ENCODE measurements at regions of chr22 and their contacts with region 1.

Region 1: DNA sequence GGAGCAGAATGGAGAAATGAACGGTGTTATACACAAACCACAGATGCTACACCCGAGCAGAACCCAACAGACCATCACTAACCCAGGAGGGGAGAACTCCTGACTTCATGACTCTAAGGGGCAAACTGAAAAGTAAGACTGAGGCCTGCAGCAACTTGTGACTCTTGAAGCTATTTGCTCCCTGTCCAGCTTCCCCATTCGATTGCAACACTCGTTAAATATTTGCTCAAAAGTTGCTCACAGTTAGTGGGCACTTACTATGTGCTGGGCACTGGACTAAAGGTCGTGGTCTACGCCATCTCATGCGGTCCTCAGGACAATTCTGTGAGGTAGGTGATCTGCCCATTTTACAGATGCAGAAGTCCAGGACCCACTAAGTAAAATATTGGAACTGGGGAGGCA is 9.5 kb upstream of the ADA2 start:
- DNase-seq: no peak
- ATAC-seq: peak in 1 of 8 donors; percentile 15
- H3K4me3 ChIP-seq: no peak overlapping the region
- H3K27ac ChIP-seq: peak overlapping the region in 1 of 10 donors; percentile 64
- H3K4me1 ChIP-seq: peaks cover 0 to 23% (median 0%) of the 10 kb centered on the region in 9 donors
- H3K27me3 ChIP-seq: peaks cover 0 to 8% (median under 1%) of the 10 kb centered on the region in 7 donors
- CTCF ChIP-seq: no peak

Region 2: GRCh38 chr22:17348461-17349113 is 119.9 kb after region 1 on chr22:
- intact Hi-C with region 1: loop called in 1 of 10 experiments (anchors 10 kb)
- DNase-seq: no peak
- ATAC-seq: no peak
- H3K4me3 ChIP-seq: no peak overlapping the region
- H3K27ac ChIP-seq: no peak overlapping the region
- H3K4me1 ChIP-seq: no peaks in the 10 kb centered on the region
- H3K27me3 ChIP-seq: peaks cover 0 to 15% (median 0%) of the 10 kb centered on the region in 7 donors
- CTCF ChIP-seq: no peak